ENCODE measurements at regions of chr19 and their contacts with region 1.

Region 1: DNA sequence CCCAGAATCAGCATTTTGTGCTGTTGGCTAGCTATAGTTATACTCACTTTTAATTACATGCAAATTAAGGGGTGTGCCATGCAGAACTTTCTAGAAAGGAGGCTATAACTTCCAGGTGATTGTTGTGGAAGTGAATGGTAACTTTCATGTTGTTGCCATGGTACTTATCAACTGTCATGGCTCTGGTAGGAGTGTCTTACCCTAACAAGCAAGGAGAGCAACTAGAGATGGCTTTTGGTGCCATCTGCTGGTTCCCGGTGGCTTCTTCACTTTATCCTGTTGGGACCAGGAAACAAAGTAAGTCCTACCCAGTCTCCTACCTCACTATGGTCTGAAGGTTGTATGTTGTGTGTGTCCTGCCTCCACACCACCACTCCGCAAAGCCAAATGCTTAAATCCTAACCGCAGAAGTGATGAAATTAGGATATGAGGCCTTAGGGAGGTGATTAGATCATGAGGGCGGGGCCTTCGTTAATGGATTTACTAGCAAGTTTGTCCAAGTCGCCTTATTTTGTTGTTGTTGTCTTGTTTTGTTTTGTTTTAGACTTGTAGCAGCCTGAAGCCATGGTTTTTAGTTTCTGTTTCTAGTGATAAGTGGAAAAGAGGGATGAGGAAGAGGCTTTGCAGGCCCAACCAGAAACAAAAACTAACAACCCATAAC is 22.6 kb downstream of the FBXL12 start:
- DNase-seq: peak; percentile 86
- H3K4me3 ChIP-seq: no peak overlapping the region
- H3K27ac ChIP-seq: peak overlapping the region; percentile 49
- H3K4me1 ChIP-seq: peaks cover 12% of the 10 kb centered on the region
- H3K27me3 ChIP-seq: no peaks in the 10 kb centered on the region
- CTCF ChIP-seq: peak; percentile 78 to 89

Region 2: DNA sequence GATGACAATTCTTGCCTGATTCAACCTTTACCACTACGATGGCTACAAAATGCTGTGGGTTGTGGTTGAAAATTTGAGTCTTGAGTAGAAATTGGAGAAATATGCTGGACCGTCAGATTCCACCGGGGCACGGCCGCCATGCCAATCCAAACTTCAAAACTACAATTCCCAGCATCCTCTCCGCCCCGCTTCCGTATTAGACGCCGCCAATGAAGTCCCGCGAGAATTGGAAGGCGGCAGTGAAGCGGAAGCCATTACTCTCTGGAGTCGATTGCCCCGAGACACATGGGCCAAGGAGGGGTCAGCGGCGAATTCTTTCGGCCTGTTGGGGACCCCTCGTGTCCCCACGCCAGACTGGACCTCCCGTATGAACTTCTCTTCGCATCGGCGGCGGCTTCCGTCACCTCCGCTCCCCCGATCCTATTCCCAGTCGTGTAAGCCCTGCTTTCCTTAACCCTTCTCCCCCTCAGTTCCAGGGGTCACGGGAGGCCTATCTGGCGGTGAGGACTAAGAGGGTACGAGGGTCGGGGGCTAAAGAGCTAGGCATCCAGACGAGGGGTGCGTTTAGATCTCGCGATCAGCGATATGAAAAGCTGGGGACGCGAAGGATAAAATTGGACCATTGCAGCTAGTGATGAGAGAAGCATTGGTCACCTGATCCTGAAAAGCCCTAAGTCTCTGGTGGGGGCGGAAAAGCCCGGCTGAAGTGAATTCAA is 655.9 kb before region 1 on chr19 and contains the start of gene ZNF317:
- CTCF ChIA-PET with region 1: no interaction called
- dilution Hi-C with region 1: no loop called
- in situ Hi-C with region 1: loop called in 1 of 2 experiments (anchors 25 kb)
- intact Hi-C with region 1: loop called (anchors 1 kb)
- DNase-seq: peak; percentile 85
- H3K4me3 ChIP-seq: peak within 1 kb of the TSS; percentile 80 to 83 (median 80)
- H3K27ac ChIP-seq: peak within 1 kb of the TSS; percentile 83
- H3K4me1 ChIP-seq: peaks cover 6% of the 10 kb centered on the region
- H3K27me3 ChIP-seq: no peaks in the 10 kb centered on the region
- CTCF ChIP-seq: no peak
- total RNA-seq, gene ZNF317: 26.3 to 36.3 TPM

Region 3: DNA sequence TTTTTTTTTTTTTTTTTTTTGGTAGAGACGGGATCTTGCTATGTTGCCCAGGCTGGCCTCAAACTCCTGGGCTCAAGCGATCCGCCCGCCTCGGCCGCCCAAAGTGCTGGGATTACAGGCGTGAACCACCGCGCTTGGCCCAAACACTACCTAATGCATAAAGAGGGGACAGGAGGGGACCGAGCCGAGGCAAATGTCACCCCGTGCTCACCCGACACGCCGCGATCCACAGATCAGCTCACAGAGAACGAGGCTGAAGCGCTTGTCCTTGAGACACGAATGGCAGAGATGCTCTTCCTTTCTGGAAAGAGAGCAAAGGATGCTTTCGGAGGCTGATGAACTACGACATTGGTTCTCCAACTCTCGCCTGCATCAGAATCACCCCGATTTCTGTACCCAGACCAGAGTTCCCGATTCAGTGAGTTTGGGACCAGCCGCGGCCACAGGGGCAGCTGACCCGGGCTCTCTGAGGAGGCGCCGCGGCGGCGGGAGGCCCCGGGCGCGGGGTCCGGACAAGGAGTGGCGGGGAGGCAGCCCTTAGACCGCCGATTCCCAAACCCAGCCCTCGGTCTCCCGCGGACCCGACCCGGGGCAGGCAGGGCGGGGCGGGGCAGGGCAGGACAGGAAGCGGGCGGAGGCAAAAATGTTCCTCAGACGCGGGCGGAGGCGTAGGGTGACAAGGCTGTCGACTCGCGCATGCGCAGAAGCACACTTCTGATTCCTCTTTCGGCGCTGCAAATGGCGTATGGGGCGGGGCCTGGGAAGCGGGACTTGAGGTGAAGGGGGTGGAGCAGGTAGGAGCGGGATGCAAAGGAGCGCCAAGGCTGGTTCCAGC is 486.9 kb before region 1 on chr19 and contains the start of gene ZNF699:
- CTCF ChIA-PET with region 1: no interaction called
- dilution Hi-C with region 1: no loop called
- in situ Hi-C with region 1: loop called in 1 of 2 experiments (anchors 10 kb)
- intact Hi-C with region 1: loop called (anchors 1 kb)
- DNase-seq: peak; percentile 96
- H3K4me3 ChIP-seq: peak within 1 kb of the TSS; percentile 77 to 82 (median 80)
- H3K27ac ChIP-seq: peak within 1 kb of the TSS; percentile 86
- H3K4me1 ChIP-seq: peaks cover 4% of the 10 kb centered on the region
- H3K27me3 ChIP-seq: no peaks in the 10 kb centered on the region
- CTCF ChIP-seq: no peak
- total RNA-seq, gene ZNF699: 11.6 to 69.2 TPM

Region 4: DNA sequence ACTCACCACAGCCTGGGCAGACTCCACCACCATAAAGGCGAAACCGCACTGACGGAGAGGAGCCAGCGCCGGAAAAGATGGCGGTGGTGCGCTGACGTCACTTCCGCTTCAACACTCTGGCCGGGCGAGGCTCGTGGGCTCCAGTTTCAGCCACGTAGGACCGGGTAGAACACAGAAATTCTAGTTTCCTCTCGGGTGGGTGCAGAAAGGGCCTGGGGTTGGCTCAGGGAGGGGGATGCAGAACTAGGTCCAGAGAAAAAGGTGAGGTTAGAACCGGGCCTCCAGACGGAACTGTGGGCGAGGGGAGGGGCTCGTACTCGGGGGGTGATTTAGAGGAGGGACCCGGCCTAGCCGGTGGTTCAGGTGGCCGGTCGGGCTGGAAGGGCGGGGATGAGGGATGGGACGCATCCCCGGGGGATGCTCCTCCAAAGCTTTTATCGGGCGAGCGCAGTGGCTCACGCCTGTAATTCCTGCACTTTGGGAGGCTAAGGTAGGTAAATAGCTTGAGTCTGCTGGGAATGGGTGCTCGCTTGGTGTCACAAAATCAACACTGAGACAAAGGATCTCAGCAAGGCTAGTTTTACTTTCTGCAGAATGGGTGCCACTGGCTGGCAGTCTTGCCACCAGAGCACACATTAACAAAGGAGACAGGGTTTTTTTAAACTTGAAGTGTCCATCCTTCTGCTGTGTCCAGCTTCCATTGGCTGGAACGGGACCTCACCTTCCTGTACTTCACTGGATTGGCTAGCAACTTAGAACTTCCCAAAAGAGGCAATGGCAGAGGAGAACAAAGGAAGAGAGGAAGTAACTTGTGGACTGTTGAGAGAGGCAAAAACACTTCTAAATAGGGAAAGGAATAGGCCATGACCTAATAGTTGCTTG is 174.8 kb before region 1 on chr19 and contains the start of gene ZNF561:
- CTCF ChIA-PET with region 1: no interaction called
- dilution Hi-C with region 1: loop called (anchors 5 kb)
- in situ Hi-C with region 1: loop called (anchors 5 to 10 kb)
- intact Hi-C with region 1: no loop called
- DNase-seq: peak; percentile 90
- H3K4me3 ChIP-seq: peak within 1 kb of the TSS; percentile 81 to 93 (median 86)
- H3K27ac ChIP-seq: peak within 1 kb of the TSS; percentile 77
- H3K4me1 ChIP-seq: peaks cover 21% of the 10 kb centered on the region
- H3K27me3 ChIP-seq: no peaks in the 10 kb centered on the region
- CTCF ChIP-seq: no peak
- total RNA-seq, gene ZNF561: 62.6 to 78.3 TPM

Region 5: DNA sequence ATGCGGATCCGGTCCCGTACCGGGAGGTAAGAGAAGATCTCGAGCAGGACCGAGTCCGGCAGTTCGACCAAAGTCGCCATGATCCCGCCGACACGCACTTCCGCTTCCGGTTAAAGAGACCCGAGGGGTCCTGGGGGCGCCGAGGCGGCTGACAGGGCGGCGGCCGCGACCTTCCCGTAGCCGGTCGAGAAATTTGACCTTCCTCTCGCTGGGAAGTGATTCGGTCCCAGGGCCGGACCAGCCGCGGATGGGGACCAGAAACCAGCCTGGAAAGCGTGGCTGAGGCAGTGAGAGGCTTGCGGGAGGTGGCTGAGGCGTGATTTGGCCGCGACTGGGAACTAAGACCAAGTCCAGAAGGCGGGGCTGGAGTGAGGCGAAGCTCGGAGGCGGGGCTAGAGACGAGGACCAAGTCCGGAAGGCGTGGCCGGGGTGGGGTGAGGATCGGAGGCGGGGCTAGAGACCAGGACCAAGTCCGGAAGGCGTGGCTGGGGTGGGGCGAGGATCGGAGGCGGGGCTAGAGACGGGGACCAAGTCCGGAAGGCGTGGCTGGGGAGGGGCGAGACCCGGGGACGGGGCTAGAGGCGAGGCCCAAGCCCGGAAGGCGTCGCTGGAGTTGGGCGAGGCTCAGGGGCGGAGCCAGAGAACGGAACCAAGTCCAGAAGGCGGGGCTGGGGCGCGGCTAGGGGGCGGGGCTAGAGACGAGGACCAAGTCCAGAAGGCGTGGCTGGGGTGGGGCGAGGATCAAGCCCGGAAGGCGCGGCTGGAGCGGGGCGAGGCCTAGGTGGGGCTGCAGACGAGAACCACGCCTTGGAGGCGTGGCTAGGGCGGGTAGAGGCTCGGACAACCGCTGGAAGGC is 22.7 kb after region 1 on chr19 and contains the start of gene FBXL12:
- CTCF ChIA-PET with region 1: no interaction called
- dilution Hi-C with region 1: no loop called
- in situ Hi-C with region 1: no loop called
- intact Hi-C with region 1: loop called (anchors 2 kb)
- DNase-seq: peak; percentile 99
- H3K4me3 ChIP-seq: peak within 1 kb of the TSS; percentile 83 to 99 (median 94)
- H3K27ac ChIP-seq: peak within 1 kb of the TSS; percentile 89
- H3K4me1 ChIP-seq: peaks cover 4% of the 10 kb centered on the region
- H3K27me3 ChIP-seq: no peaks in the 10 kb centered on the region
- CTCF ChIP-seq: no peak
- total RNA-seq, gene FBXL12: 16.3 to 28.3 TPM

Region 6: DNA sequence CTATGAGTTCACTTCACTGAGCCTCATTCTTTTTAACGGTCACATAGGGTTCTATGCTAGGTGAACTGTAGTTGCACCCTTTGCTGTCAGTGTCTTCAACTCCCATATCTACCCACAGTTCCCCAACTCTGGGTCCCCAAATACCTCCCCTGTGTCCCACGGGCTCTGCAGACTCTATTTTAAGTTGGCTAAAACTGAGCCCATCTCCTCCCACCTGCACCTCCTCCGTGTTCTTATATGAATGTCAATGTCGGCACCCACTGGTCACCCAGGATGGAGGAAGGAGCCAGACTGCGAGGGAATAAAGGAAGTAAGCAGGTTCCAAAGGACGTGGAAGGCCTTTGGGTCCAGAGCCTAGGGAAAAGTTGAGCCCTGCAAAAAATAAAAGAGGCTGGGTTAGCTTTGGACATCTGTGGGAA is 38.1 kb after region 1 on chr19:
- CTCF ChIA-PET with region 1: no interaction called
- dilution Hi-C with region 1: no loop called
- in situ Hi-C with region 1: no loop called
- intact Hi-C with region 1: no loop called
- DNase-seq: no peak
- H3K4me3 ChIP-seq: peak overlapping the region in 1 of 3 experiments; percentile 80
- H3K27ac ChIP-seq: no peak overlapping the region
- H3K4me1 ChIP-seq: peaks cover 6% of the 10 kb centered on the region
- H3K27me3 ChIP-seq: no peaks in the 10 kb centered on the region
- CTCF ChIP-seq: no peak

Region 7: GRCh38 chr19:9934132-9934950 is 138.1 kb after region 1 on chr19:
- CTCF ChIA-PET with region 1: no interaction called
- dilution Hi-C with region 1: no loop called
- in situ Hi-C with region 1: no loop called
- intact Hi-C with region 1: no loop called
- DNase-seq: peak; percentile 59
- H3K4me3 ChIP-seq: no peak overlapping the region
- H3K27ac ChIP-seq: no peak overlapping the region
- H3K4me1 ChIP-seq: no peaks in the 10 kb centered on the region
- H3K27me3 ChIP-seq: peaks cover 2% of the 10 kb centered on the region
- CTCF ChIP-seq: peak; percentile 82 to 95

Measured in mammary epithelial cell (primary cell).